ENCODE measurements at regions of chr3 and their contacts with region 1.

Region 1: GRCh38 chr3:187064196-187065115 is 74.8 kb downstream of the RPL39L start:
- DNase-seq: peak in 1 of 2 experiments; percentile 13
- H3K4me3 ChIP-seq: no peak overlapping the region
- H3K4me3 Mint-ChIP-seq: peak overlapping the region; percentile 52
- H3K27ac Mint-ChIP-seq: peak overlapping the region; percentile 97
- H3K4me1 ChIP-seq: peaks cover 27% of the 10 kb centered on the region
- H3K4me1 Mint-ChIP-seq: peaks cover 28% of the 10 kb centered on the region
- H3K27me3 ChIP-seq: no peaks in the 10 kb centered on the region
- H3K27me3 Mint-ChIP-seq: no peaks in the 10 kb centered on the region
- CTCF ChIP-seq: no peak

Region 2: GRCh38 chr3:186930641-186931531 is 133.6 kb before region 1 on chr3:
- CTCF ChIA-PET with region 1: no interaction called
- POLR2A ChIA-PET with region 1: no interaction called
- intact Hi-C with region 1: loop called (anchors 2 kb)
- DNase-seq: peak; percentile 67 to 80
- H3K4me3 ChIP-seq: peak overlapping the region; percentile 81
- H3K4me3 Mint-ChIP-seq: peak overlapping the region; percentile 91
- H3K27ac Mint-ChIP-seq: peak overlapping the region; percentile 83
- H3K4me1 ChIP-seq: no peaks in the 10 kb centered on the region
- H3K4me1 Mint-ChIP-seq: peaks cover 5% of the 10 kb centered on the region
- H3K27me3 ChIP-seq: no peaks in the 10 kb centered on the region
- H3K27me3 Mint-ChIP-seq: no peaks in the 10 kb centered on the region
- CTCF ChIP-seq: peak in 1 of 2 experiments; percentile 12

Region 3: GRCh38 chr3:186979837-186980236 is 84.6 kb before region 1 on chr3:
- CTCF ChIA-PET with region 1: no interaction called
- POLR2A ChIA-PET with region 1: no interaction called
- intact Hi-C with region 1: loop called (anchors 5 kb)
- DNase-seq: no peak
- H3K4me3 ChIP-seq: no peak overlapping the region
- H3K4me3 Mint-ChIP-seq: no peak overlapping the region
- H3K27ac Mint-ChIP-seq: no peak overlapping the region
- H3K4me1 ChIP-seq: peaks cover 16% of the 10 kb centered on the region
- H3K4me1 Mint-ChIP-seq: peaks cover 28% of the 10 kb centered on the region
- H3K27me3 ChIP-seq: no peaks in the 10 kb centered on the region
- H3K27me3 Mint-ChIP-seq: no peaks in the 10 kb centered on the region
- CTCF ChIP-seq: no peak

Region 4: GRCh38 chr3:187587076-187587475 is 522.6 kb after region 1 on chr3:
- CTCF ChIA-PET with region 1: no interaction called
- POLR2A ChIA-PET with region 1: no interaction called
- intact Hi-C with region 1: no loop called
- DNase-seq: no peak
- H3K4me3 ChIP-seq: no peak overlapping the region
- H3K4me3 Mint-ChIP-seq: no peak overlapping the region
- H3K27ac Mint-ChIP-seq: no peak overlapping the region
- H3K4me1 ChIP-seq: no peaks in the 10 kb centered on the region
- H3K4me1 Mint-ChIP-seq: no peaks in the 10 kb centered on the region
- H3K27me3 ChIP-seq: no peaks in the 10 kb centered on the region
- H3K27me3 Mint-ChIP-seq: peaks cover 3% of the 10 kb centered on the region
- CTCF ChIP-seq: no peak

Measured in Caco-2 (cell line).